Right ventricle myocardium inferior (tissue), 1 donor: ENCODE measurements at regions of chr6 and their contacts with region 1.

Region 1: GRCh38 chr6:122530440-122531046 is 58.9 kb upstream of the SERINC1 start:
- DNase-seq: no peak
- ATAC-seq: peak; percentile 71

Region 2: DNA sequence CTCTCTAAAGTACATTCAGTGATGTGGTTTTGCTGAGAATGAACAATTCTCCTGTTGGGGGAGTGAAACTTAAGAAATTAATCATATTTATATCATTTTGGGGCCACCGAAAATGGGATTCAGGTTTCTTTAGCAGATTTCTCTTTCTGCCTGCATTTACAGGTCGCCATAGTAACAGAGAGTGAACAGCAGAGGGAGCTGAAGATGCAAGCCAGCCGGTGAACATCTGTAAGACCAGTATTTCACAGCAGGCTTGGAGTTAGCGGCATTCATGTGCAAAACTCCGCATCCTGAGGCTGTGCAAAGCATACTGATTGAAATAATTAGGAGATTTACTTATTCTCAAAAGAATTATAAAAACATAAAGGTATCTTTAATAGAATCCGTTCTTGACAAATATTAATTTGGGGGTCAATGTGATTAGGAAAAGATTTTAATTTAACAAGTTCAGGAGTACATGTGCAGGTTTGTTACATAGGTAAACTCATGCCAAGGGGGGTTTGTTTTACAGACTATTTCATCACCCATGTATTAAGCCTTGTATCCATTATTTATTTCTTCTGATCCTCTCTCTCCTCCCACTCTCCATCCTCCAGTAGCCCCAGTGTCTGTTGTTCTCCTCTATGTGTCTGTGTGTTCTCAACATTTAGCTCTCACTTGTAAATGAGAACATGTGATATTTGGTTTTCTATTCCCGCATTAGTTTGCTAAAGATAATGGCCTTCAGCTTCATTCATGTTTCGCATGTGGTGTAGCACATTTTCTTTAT is 148.9 kb before region 1 on chr6:
- intact Hi-C with region 1: loop called (anchors 1 kb)
- DNase-seq: no peak
- ATAC-seq: peak; percentile 68

Region 3: DNA sequence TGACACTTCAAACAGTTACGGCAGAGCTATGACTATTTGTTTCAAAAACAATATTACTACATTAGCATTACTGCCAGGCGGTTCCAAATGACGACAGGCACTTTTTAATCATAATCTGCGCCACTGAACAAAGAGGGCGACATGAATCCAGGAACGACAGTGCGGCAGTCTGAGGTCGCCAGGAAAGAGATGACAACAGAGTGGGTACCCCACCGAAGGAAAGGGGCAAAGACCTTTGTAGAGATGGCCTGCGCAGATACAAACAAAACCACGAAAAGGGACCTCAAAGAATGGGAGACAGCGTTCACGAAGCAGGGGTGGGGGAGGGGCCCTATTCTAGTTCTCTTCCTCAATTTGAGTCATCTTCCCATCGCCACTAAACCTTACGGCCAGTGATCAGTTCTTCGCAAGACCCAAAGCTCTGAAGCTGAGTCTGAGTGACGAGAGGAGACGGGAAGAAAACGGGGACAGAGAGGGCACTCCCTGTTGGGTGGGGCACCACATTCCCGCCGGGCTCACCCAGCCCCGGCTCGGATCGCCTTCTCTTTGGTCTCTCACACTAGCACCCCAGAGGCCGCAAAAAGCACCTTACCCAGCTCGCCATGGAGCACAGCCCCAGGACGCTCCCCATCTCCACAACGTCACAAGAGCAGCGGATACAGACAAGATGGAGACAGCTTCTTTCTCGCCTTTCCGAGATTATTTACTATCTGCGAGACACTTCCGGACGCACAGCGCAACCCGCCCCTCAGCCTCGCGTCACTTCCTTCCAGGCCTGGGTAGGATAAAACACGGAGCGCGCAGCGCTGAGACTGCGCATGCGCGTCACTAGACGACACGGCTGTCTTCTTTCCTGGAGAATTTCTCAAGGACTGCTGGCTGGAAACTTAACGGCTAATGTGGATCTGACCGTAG is 59.2 kb before region 1 on chr6 and contains the start of gene SERINC1:
- intact Hi-C with region 1: loop called (anchors 5 kb)
- DNase-seq: peak; percentile 97
- ATAC-seq: peak; percentile 99
- total RNA-seq, gene SERINC1: 155 TPM

Region 4: DNA sequence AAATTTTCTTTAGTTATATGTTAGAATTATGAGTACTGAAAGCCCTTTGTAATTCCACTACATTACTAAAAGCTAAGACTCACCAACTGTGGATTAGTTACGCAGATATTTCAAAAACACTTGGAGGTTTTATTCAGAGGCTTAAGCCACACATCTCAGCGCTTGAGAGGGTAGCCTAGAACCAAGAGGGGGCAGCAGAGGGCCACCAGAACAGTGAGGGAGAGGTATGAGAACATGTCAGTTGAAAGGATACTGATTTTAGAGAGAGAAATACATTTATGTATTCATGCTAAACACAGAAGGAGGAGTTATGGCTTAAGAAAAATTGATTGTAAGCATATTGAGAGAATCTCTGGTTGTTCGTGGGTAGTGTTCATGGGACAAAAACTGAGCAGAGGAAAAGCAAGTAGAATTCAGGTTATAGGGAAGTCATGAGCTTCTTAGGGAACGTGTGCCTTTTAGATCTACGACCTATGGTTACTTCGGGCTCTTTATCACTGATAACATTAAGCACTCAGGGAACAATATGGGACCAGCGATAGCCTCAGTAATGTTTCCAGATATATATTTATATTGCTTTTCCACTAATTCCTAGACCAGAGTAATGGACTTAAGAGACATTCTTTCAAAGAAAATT is 38.5 kb before region 1 on chr6:
- intact Hi-C with region 1: loop called (anchors 5 kb)
- DNase-seq: peak; percentile 71
- ATAC-seq: peak; percentile 86

Region 5: GRCh38 chr6:122511193-122511924 is 19.2 kb before region 1 on chr6:
- intact Hi-C with region 1: no loop called
- DNase-seq: no peak
- ATAC-seq: no peak

Region 6: DNA sequence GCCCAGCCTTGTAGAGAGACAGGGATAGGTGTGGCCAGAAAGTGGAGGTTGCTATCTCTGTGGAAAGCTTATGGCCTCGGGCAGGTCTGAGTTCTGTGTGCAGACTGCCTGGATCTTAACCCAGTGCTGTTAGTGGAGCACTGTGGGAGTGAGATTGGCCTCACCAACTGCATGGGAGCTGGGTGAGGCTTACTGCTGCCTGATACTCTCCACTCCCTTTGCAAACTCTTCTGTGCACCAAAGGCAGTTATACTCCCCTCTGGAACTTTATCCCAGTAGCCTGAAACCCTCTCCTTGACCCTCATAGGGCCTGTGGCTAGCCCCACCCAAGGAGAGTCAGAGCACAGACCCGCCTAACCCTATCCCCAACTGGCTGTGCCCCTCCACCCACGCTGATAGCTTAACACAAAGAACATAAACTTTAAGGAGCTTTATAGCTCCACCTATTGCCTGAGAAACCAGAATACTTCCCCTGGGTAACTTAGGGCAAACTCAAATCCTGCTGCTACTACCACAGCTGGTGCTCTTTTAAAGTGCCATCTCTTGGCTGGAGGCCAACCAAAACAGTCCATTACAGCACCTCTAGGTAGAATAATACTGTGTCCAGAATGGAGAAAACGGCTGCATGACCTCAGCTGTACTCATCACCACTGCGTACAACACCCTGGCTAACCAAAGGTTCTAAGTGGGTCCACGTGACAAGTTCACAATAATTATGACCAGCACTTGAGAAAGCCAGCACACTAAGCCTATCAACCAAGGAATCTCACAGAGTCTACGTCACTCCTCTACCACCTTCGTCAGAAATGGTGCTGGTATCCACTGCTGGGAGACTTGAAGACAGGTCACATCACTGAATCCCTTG is 38.5 kb after region 1 on chr6:
- intact Hi-C with region 1: no loop called
- DNase-seq: no peak
- ATAC-seq: no peak